Heart right ventricle (tissue), 16 donors: ENCODE measurements at regions of chr15 and their contacts with region 1.

Region 1: DNA sequence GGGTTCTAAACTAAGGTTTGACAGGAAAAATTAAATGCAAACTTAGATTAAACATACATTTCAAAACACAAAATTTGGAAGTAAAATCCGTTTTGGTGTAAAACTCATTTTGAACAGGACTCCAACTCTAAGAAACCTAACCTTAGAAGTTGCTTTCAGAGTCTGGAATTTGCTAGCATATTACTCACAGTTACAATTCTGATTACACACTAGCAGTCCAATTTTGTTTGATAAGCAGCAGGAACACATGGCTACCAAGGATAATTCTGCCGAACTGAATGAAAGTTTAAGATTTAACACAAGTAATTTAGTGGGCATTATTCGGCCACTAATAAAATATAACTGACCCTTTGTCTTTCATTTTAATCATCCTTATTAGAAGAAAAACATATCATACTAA is 49.6 kb downstream of the FRMD5 start:
- DNase-seq: no peak
- ATAC-seq: no peak
- H3K4me3 ChIP-seq: no peak overlapping the region
- H3K27ac ChIP-seq: peak overlapping the region in 2 of 10 donors; percentile 36 to 55
- H3K4me1 ChIP-seq: peaks cover 0 to 26% (median 4%) of the 10 kb centered on the region in 9 donors
- H3K27me3 ChIP-seq: no peaks in the 10 kb centered on the region
- CTCF ChIP-seq: no peak

Region 2: GRCh38 chr15:43974852-43975251 is 170.6 kb before region 1 on chr15:
- intact Hi-C with region 1: no loop called
- DNase-seq: peak in 1 of 2 donors; percentile 5
- ATAC-seq: peak in 4 of 8 donors; percentile 66 to 92 (median 78)
- H3K4me3 ChIP-seq: no peak overlapping the region
- H3K27ac ChIP-seq: peak overlapping the region in 5 of 10 donors; percentile 10 to 77 (median 45)
- H3K4me1 ChIP-seq: peaks cover 0 to 22% (median 0%) of the 10 kb centered on the region in 9 donors
- H3K27me3 ChIP-seq: no peaks in the 10 kb centered on the region
- CTCF ChIP-seq: no peak

Region 3: GRCh38 chr15:44010089-44010488 is 135.4 kb before region 1 on chr15:
- intact Hi-C with region 1: no loop called
- DNase-seq: no peak
- ATAC-seq: no peak
- H3K4me3 ChIP-seq: no peak overlapping the region
- H3K27ac ChIP-seq: no peak overlapping the region
- H3K4me1 ChIP-seq: no peaks in the 10 kb centered on the region
- H3K27me3 ChIP-seq: no peaks in the 10 kb centered on the region
- CTCF ChIP-seq: no peak

Region 4: DNA sequence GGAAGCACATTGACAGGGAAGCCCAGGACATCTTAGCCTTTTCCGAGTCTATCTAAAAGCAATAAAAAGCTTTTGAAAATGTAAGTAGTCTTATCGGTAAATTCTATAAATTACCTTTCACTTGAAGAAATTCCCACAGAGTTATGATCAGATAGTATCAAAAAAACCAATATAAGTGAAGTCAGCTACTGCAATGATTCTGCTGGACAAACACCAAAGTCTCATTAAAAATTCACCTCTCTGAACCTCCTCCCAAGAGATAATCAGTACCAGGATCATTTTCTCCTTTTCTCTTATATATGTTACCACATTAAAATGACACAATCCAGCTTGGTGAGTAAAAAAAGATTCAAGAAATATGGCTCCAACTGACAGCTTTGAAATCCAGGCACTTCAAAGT is 19.6 kb before region 1 on chr15:
- intact Hi-C with region 1: loop called in 1 of 10 experiments (anchors 1 kb)
- DNase-seq: no peak
- ATAC-seq: no peak
- H3K4me3 ChIP-seq: no peak overlapping the region
- H3K27ac ChIP-seq: no peak overlapping the region
- H3K4me1 ChIP-seq: no peaks in the 10 kb centered on the region
- H3K27me3 ChIP-seq: peaks cover 0 to 11% (median 0%) of the 10 kb centered on the region in 7 donors
- CTCF ChIP-seq: no peak